ENCODE measurements at regions of chr12 and their contacts with region 1.

Region 1: GRCh38 chr12:116277393-116278278 is at the start of gene MED13L:
- DNase-seq: no peak
- ATAC-seq: peak; percentile 88
- H3K4me3 ChIP-seq: peak within 1 kb of the TSS; percentile 66 to 75
- H3K27ac ChIP-seq: peak within 1 kb of the TSS; percentile 98
- H3K4me1 ChIP-seq: peaks cover 53% of the 10 kb centered on the region
- H3K27me3 ChIP-seq: no peaks in the 10 kb centered on the region
- CTCF ChIP-seq: peak; percentile 84
- total RNA-seq, gene MED13L: 170 TPM

Region 2: DNA sequence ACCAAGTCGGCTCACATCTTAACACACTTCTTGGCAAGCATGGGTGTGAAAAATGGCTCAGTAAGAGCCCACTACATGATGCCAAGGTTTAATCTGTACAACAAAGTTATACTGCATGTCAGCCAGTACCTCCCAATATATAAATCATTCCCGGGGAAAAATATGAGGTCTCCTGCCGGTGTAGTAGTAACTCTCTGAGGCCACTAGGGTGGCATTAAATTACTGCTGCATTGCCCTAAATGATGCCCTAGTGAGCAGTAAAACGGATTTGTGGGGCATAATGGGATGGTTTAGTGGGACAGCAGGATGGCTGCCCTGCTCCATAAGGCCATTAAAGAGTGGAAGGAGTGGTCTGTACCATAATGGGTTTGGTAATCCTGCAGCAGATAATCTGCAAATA is 267.8 kb before region 1 on chr12:
- CTCF ChIA-PET with region 1: no interaction called
- POLR2A ChIA-PET with region 1: no interaction called
- in situ Hi-C with region 1: no loop called
- intact Hi-C with region 1: loop called (anchors 10 kb)
- DNase-seq: no peak
- ATAC-seq: no peak
- H3K4me3 ChIP-seq: no peak overlapping the region
- H3K27ac ChIP-seq: no peak overlapping the region
- H3K4me1 ChIP-seq: no peaks in the 10 kb centered on the region
- H3K27me3 ChIP-seq: no peaks in the 10 kb centered on the region
- CTCF ChIP-seq: peak; percentile 58

Region 3: GRCh38 chr12:116426391-116427136 is 148.9 kb after region 1 on chr12:
- CTCF ChIA-PET with region 1: no interaction called
- POLR2A ChIA-PET with region 1: interaction called, 3 read pairs
- in situ Hi-C with region 1: no loop called
- intact Hi-C with region 1: loop called (anchors 2 kb)
- DNase-seq: peak; percentile 7
- ATAC-seq: peak; percentile 89
- H3K4me3 ChIP-seq: peak overlapping the region in 1 of 2 experiments; percentile 49; a peak in 2 of 4 replicates
- H3K27ac ChIP-seq: peak overlapping the region; percentile 99
- H3K4me1 ChIP-seq: peaks cover 31% of the 10 kb centered on the region
- H3K27me3 ChIP-seq: no peaks in the 10 kb centered on the region
- CTCF ChIP-seq: no peak; the same call in 1 of the 2 replicates

Region 4: DNA sequence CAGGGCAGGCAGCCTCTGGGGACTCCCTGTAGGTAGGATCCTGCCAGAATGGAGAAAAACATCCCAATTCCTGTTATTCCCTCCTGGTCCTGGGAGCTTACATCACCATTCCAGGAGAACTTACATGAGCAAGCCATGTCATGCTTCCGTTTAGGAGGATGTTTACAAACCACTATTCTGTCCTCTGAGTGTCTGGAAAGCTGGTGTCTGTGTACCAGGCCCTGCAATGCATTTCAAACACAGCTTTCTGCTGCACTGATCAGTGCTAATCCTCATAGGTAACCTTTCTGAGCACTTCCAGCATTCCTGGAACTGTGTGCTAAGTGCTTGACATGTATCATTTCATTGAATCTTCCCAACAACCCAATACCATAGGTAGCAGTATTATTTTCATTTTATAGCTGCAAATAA is 261.7 kb after region 1 on chr12:
- CTCF ChIA-PET with region 1: interaction called, 12 read pairs
- POLR2A ChIA-PET with region 1: no interaction called
- in situ Hi-C with region 1: no loop called
- intact Hi-C with region 1: no loop called
- DNase-seq: no peak
- ATAC-seq: peak; percentile 64
- H3K4me3 ChIP-seq: peak overlapping the region in 1 of 2 experiments; percentile 0; a peak in 1 of 4 replicates
- H3K27ac ChIP-seq: peak overlapping the region; percentile 93
- H3K4me1 ChIP-seq: peaks cover 60% of the 10 kb centered on the region
- H3K27me3 ChIP-seq: no peaks in the 10 kb centered on the region
- CTCF ChIP-seq: no peak

Region 5: DNA sequence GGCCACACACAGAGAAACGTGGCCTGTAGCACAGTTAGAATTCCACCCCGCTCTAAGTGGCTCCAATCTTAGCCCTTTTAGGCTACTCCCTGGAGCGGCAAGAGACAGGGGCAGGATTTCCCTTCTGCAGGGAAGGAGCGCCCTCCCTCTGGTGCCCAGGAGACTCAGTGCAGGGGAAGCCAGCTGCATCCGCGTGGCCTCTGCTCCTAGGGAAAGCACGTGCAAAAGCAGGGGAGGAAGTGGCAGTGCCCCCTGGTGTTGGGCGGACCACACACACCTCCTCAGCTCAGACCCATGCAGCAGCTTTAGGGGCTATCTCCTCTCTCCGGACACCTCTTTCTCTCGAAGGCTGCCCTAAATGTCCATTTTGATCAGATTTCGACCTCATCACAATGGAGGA is 410.3 kb after region 1 on chr12:
- CTCF ChIA-PET with region 1: no interaction called
- POLR2A ChIA-PET with region 1: no interaction called
- in situ Hi-C with region 1: no loop called
- intact Hi-C with region 1: loop called (anchors 10 kb)
- DNase-seq: no peak
- ATAC-seq: peak; percentile 85
- H3K4me3 ChIP-seq: no peak overlapping the region
- H3K27ac ChIP-seq: no peak overlapping the region
- H3K4me1 ChIP-seq: peaks cover 11% of the 10 kb centered on the region
- H3K27me3 ChIP-seq: no peaks in the 10 kb centered on the region
- CTCF ChIP-seq: peak; percentile 76

Measured in Panc1 (cell line).